Body of pancreas (tissue), 4 donors: ENCODE measurements at regions of chr19 and their contacts with region 1.

Region 1: DNA sequence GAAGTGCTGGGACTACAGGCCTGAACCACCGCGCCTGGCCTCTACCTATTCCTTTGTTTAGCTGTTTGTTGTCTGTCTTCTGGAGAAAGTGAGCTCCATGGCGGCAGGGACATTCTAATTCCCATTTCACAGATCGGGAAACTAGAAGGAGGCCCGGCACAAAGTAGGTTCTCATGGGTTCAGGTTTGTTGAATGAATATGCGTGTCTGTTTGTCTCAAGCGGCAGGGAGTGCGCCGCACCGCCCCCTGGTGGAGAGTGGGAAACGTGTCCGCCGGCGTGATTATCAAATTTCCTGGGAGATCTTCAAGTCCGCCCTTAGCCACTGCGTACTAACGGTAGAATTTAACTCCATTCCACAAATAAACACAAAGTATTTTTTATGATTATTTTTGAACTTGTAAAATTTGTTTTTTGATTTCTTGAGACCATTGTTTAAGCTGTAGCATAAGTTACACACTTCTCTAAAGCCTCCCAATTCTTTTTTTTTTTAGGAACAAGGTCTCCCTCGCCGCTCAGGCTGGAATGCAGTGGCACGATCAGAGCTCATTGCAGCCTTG is 8.9 kb upstream of the CCDC9 start:
- DNase-seq: peak; percentile 78 to 87 (median 80)
- ATAC-seq: peak; percentile 52
- H3K4me3 ChIP-seq: no peak overlapping the region
- H3K27ac ChIP-seq: no peak overlapping the region
- H3K4me1 ChIP-seq: peaks cover 26% of the 10 kb centered on the region
- H3K27me3 ChIP-seq: no peaks in the 10 kb centered on the region
- CTCF ChIP-seq: peak; percentile 84 to 95 (median 87)
- POLR2A ChIP-seq: no peak

Region 2: DNA sequence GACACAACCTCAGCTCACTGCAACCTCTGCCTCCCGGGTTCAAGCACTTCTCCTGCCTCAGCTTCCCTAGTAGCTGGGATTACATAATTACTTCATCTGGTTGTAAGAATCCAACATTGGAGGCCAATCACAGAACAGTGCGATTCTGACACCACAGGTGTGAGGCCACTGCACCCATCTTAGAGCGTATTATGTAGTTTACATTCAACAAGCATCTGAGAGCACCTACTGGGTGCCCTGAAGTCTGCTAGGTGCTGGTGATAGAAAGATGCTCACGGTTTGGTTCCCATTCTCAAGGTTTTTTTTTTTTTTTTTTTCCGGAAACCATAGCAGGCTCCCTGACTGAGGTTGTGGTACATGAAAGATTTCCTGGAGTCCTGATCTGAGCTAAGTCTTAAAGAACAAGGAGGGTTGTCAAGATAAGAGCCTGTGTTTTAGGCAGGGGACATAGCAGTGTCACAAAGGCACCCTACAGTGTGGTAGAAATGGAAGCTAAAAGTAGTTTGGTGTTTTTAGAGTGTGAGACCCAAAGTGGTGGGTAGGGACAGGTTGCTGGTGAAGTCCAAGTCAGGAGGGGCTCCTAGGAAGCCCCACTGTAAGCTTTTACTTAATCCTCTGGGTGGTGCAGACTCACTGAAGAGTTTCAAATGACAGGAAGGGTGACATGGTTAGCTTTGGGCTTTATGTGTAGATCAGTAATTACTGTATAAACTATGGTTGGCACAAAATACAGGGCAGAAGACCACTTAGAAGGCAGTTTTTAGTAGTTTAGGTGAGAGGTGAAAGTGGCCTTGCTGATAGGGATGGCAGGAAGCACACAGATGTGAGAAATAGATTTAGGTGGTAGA is 101.5 kb before region 1 on chr19:
- intact Hi-C with region 1: loop called (anchors 5 kb)
- DNase-seq: no peak
- ATAC-seq: no peak
- H3K4me3 ChIP-seq: no peak overlapping the region
- H3K27ac ChIP-seq: no peak overlapping the region
- H3K4me1 ChIP-seq: no peaks in the 10 kb centered on the region
- H3K27me3 ChIP-seq: no peaks in the 10 kb centered on the region
- CTCF ChIP-seq: no peak
- POLR2A ChIP-seq: no peak

Region 3: DNA sequence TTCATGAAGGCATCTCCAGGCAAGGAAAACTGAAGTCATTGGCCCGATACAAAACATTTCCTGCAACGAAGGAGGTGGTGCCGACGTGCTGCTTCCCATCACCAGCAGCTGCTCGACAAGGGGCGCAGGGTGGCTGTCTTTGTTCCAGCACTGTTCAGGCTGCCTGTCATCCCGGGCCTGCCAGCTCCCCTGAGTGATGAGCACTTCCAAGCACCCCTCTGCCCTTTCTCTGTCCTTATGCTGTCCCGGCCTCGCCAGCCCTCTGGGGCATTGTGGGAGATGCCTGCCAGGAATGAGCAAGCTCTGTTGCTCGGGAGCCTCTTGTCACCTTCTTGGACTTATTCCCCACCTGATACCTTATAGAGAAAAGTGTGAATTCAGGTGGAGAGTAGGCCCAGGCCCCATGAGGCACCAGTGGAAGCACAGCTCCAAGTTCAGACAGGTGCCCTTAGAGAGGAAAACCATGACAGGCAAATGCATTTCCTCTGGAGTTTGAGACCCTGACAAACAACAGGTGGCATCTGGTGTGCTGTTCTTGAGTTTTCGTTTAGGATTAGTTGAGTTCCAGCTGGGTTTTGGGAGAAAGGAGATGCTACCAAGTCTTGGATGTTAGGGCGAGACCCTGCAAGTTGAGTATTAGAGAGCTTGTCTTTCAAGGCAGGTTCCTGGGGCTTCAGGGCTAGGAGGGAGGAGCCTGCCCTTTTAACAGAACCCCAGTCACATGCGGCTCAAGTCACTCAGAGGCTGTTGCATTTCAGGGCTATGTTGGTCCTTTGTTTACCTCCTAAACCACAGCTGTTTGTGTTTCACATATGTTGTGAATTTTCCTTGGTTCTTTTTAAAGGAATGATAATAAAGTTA is 37.9 kb before region 1 on chr19:
- intact Hi-C with region 1: loop called (anchors 5 kb)
- DNase-seq: no peak
- ATAC-seq: no peak
- H3K4me3 ChIP-seq: no peak overlapping the region
- H3K27ac ChIP-seq: no peak overlapping the region
- H3K4me1 ChIP-seq: peaks cover 4% of the 10 kb centered on the region
- H3K27me3 ChIP-seq: no peaks in the 10 kb centered on the region
- CTCF ChIP-seq: no peak
- POLR2A ChIP-seq: no peak